Naive thymus-derived CD4-positive, alpha-beta T cell (primary cell): ENCODE measurements at regions of chr4 and their contacts with region 1.

Region 1: DNA sequence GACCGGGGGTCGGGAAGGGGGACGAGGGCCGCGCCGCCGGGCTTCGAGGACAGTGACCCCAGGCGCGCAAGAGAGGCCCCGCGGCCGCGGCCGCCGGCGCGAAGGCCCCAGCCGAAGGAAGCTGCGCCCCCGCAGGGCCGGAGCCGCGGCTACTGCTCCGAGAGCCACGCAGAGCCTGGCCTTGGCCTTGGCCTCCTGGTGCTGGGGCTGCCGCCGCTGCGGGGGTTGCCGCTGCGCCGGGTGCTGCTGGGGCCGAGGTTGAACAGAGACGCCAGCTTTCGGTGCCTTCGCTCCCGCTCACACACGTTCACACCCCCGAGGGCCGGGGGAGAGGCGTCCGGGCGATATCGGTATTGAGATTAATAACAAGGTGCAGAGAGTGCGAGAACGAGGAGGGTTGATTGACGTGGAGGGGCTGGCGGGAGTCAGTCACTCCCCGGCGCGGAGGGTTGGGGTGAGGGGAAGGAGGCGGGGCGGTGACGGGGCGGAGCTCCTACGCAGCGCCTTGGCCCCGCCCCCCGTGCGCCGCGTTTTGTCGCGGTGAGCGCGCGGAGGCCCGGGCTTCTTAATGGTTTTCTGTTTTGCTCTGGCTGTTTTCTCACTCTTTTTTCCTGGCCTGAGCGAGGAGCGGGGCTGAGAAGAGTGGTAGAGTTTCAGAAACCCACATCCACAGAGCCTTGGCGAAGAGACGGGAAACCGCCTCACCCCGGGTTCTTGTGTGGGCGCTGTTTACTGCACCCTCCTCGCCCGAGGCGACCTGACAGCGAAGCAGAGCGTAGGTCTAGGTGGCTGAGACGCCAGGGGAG is 878 bp upstream of the CNOT6L start:
- DNase-seq: peak; percentile 95 to 99 (median 98)
- ATAC-seq: peak; percentile 87
- H3K4me3 ChIP-seq: peak overlapping the region; percentile 93
- H3K4me3 Mint-ChIP-seq: peak overlapping the region; percentile 93 to 99 (median 96)
- H3K27ac ChIP-seq: peak overlapping the region; percentile 100
- H3K27ac Mint-ChIP-seq: peak overlapping the region; percentile 88 to 100 (median 99)
- H3K4me1 ChIP-seq: peaks cover 39 to 42% of the 10 kb centered on the region in 2 donors
- H3K4me1 Mint-ChIP-seq: peaks cover 37 to 69% (median 53%) of the 10 kb centered on the region in 7 donors
- H3K27me3 ChIP-seq: no peaks in the 10 kb centered on the region
- H3K27me3 Mint-ChIP-seq: peaks cover 0 to 2% (median 0%) of the 10 kb centered on the region in 5 donors

Region 2: GRCh38 chr4:77187322-77187721 is 632.7 kb before region 1 on chr4:
- CTCF ChIA-PET with region 1: no interaction called
- POLR2A ChIA-PET with region 1: no interaction called
- intact Hi-C with region 1: no loop called
- DNase-seq: no peak
- ATAC-seq: no peak
- H3K4me3 ChIP-seq: no peak overlapping the region
- H3K4me3 Mint-ChIP-seq: no peak overlapping the region
- H3K27ac ChIP-seq: no peak overlapping the region
- H3K27ac Mint-ChIP-seq: no peak overlapping the region
- H3K4me1 ChIP-seq: no peaks in the 10 kb centered on the region
- H3K4me1 Mint-ChIP-seq: peaks cover 0 to 8% (median 0%) of the 10 kb centered on the region in 7 donors
- H3K27me3 ChIP-seq: no peaks in the 10 kb centered on the region
- H3K27me3 Mint-ChIP-seq: peaks cover 2 to 25% (median 6%) of the 10 kb centered on the region in 5 donors

Region 3: GRCh38 chr4:77734928-77735327 is 85.1 kb before region 1 on chr4:
- CTCF ChIA-PET with region 1: interaction called, 4 read pairs
- POLR2A ChIA-PET with region 1: no interaction called
- intact Hi-C with region 1: loop called in 1 of 2 experiments (anchors 2 kb)
- DNase-seq: peak in 8 of 9 donors; percentile 9 to 34 (median 18)
- ATAC-seq: peak; percentile 80
- H3K4me3 ChIP-seq: no peak overlapping the region
- H3K4me3 Mint-ChIP-seq: peak overlapping the region in 9 of 10 donors; percentile 53 to 83 (median 71)
- H3K27ac ChIP-seq: peak overlapping the region; percentile 25
- H3K27ac Mint-ChIP-seq: peak overlapping the region; percentile 18 to 90 (median 81)
- H3K4me1 ChIP-seq: peaks cover 14 to 17% of the 10 kb centered on the region in 2 donors
- H3K4me1 Mint-ChIP-seq: peaks cover 36 to 85% (median 73%) of the 10 kb centered on the region in 7 donors
- H3K27me3 ChIP-seq: no peaks in the 10 kb centered on the region
- H3K27me3 Mint-ChIP-seq: no peaks in the 10 kb centered on the region

Region 4: DNA sequence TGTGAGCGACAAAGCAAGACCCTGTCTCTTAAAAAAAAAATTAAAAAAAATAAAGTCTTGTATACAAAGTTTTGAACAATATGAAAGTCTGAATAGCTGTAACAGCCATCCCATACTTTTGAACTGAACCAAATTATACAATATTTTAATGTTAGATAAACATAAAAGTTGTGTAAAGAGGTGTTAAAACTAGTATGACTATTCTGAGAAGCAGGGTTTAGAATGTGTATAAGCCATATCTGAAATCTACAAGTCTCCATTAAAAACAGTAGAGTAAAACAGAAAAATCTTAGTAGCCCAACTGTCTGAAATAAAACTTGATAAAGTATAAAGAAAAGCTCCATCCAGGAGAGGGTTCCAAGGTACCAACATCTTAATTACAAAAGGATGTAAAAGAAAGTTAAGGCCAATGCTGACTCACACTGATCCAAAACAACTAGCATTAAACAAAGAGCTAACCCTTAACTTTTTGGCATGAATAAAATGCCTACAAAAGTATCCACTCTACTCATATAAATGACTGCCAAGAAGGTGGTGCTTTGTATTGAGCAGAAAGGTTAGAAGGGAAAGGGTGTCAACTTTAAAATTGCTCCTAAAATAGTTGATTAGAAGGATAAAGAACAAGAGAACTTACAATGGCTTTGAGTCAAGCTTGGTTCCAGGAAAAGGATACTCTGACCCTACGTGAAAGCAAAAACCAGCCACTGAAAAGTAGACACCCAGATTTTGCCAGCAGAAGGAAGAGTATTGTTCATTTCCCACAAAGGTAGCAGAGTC is 19.4 kb before region 1 on chr4:
- CTCF ChIA-PET with region 1: no interaction called
- POLR2A ChIA-PET with region 1: interaction called, 41 read pairs
- intact Hi-C with region 1: loop called (anchors 1 kb)
- DNase-seq: no peak
- ATAC-seq: peak; percentile 23
- H3K4me3 ChIP-seq: peak overlapping the region; percentile 35
- H3K4me3 Mint-ChIP-seq: peak overlapping the region; percentile 43 to 85 (median 79)
- H3K27ac ChIP-seq: peak overlapping the region; percentile 70
- H3K27ac Mint-ChIP-seq: peak overlapping the region; percentile 65 to 91 (median 84)
- H3K4me1 ChIP-seq: peaks cover 51 to 74% of the 10 kb centered on the region in 2 donors
- H3K4me1 Mint-ChIP-seq: peaks cover 47 to 98% (median 77%) of the 10 kb centered on the region in 7 donors
- H3K27me3 ChIP-seq: no peaks in the 10 kb centered on the region
- H3K27me3 Mint-ChIP-seq: no peaks in the 10 kb centered on the region

Region 5: GRCh38 chr4:77834403-77834802 is 14.4 kb after region 1 on chr4:
- CTCF ChIA-PET with region 1: no interaction called
- POLR2A ChIA-PET with region 1: interaction called, 22 read pairs
- intact Hi-C with region 1: loop called (anchors 2 kb)
- DNase-seq: no peak
- ATAC-seq: no peak
- H3K4me3 ChIP-seq: no peak overlapping the region
- H3K4me3 Mint-ChIP-seq: no peak overlapping the region
- H3K27ac ChIP-seq: no peak overlapping the region
- H3K27ac Mint-ChIP-seq: peak overlapping the region in 1 of 9 donors; percentile 59
- H3K4me1 ChIP-seq: no peaks in the 10 kb centered on the region
- H3K4me1 Mint-ChIP-seq: peaks cover 2 to 18% (median 7%) of the 10 kb centered on the region in 7 donors
- H3K27me3 ChIP-seq: no peaks in the 10 kb centered on the region
- H3K27me3 Mint-ChIP-seq: peaks cover 0 to 3% (median 0%) of the 10 kb centered on the region in 5 donors

Region 6: GRCh38 chr4:77852892-77853495 is 32.9 kb after region 1 on chr4:
- CTCF ChIA-PET with region 1: interaction called, 6 read pairs
- POLR2A ChIA-PET with region 1: interaction called, 531 read pairs
- intact Hi-C with region 1: loop called (anchors 1 kb)
- DNase-seq: peak; percentile 22 to 79 (median 70)
- ATAC-seq: peak; percentile 91
- H3K4me3 ChIP-seq: peak overlapping the region; percentile 50
- H3K4me3 Mint-ChIP-seq: peak overlapping the region; percentile 72 to 93 (median 80)
- H3K27ac ChIP-seq: peak overlapping the region; percentile 77
- H3K27ac Mint-ChIP-seq: peak overlapping the region; percentile 95 to 100 (median 98)
- H3K4me1 ChIP-seq: peaks cover 53 to 57% of the 10 kb centered on the region in 2 donors
- H3K4me1 Mint-ChIP-seq: peaks cover 45 to 62% (median 60%) of the 10 kb centered on the region in 7 donors
- H3K27me3 ChIP-seq: no peaks in the 10 kb centered on the region
- H3K27me3 Mint-ChIP-seq: no peaks in the 10 kb centered on the region